Activated B cell treated with CpG ODN at 0.5 μM for 24 hours (primary cell): ENCODE measurements at regions of chr1 and their contacts with region 1.

Region 1: GRCh38 chr1:78730053-78730452 is 80.4 kb downstream of the IFI44 start:
- DNase-seq: no peak
- ATAC-seq: no peak
- H3K4me3 Mint-ChIP-seq: no peak overlapping the region
- H3K27ac Mint-ChIP-seq: no peak overlapping the region
- H3K4me1 Mint-ChIP-seq: no peaks in the 10 kb centered on the region
- H3K27me3 Mint-ChIP-seq: no peaks in the 10 kb centered on the region
- CTCF ChIP-seq: no peak

Region 2: GRCh38 chr1:78511334-78511733 is 218.7 kb before region 1 on chr1:
- CTCF ChIA-PET with region 1: no interaction called
- POLR2A ChIA-PET with region 1: no interaction called
- intact Hi-C with region 1: no loop called
- DNase-seq: no peak
- ATAC-seq: no peak
- H3K4me3 Mint-ChIP-seq: no peak overlapping the region
- H3K27ac Mint-ChIP-seq: no peak overlapping the region
- H3K4me1 Mint-ChIP-seq: no peaks in the 10 kb centered on the region
- H3K27me3 Mint-ChIP-seq: no peaks in the 10 kb centered on the region
- CTCF ChIP-seq: no peak

Region 3: GRCh38 chr1:78716186-78716585 is 13.9 kb before region 1 on chr1:
- CTCF ChIA-PET with region 1: no interaction called
- POLR2A ChIA-PET with region 1: no interaction called
- intact Hi-C with region 1: loop called (anchors 2 kb)
- DNase-seq: no peak
- ATAC-seq: no peak
- H3K4me3 Mint-ChIP-seq: no peak overlapping the region
- H3K27ac Mint-ChIP-seq: no peak overlapping the region
- H3K4me1 Mint-ChIP-seq: no peaks in the 10 kb centered on the region
- H3K27me3 Mint-ChIP-seq: peaks cover 2% of the 10 kb centered on the region
- CTCF ChIP-seq: no peak

Region 4: GRCh38 chr1:79945391-79945790 is 1215.3 kb after region 1 on chr1:
- CTCF ChIA-PET with region 1: no interaction called
- POLR2A ChIA-PET with region 1: no interaction called
- intact Hi-C with region 1: no loop called
- DNase-seq: no peak
- ATAC-seq: no peak
- H3K4me3 Mint-ChIP-seq: no peak overlapping the region
- H3K27ac Mint-ChIP-seq: no peak overlapping the region
- H3K4me1 Mint-ChIP-seq: no peaks in the 10 kb centered on the region
- H3K27me3 Mint-ChIP-seq: no peaks in the 10 kb centered on the region
- CTCF ChIP-seq: no peak